AG04449 (cell line): ENCODE measurements at regions of chr2 and their contacts with region 1.

Region 1: DNA sequence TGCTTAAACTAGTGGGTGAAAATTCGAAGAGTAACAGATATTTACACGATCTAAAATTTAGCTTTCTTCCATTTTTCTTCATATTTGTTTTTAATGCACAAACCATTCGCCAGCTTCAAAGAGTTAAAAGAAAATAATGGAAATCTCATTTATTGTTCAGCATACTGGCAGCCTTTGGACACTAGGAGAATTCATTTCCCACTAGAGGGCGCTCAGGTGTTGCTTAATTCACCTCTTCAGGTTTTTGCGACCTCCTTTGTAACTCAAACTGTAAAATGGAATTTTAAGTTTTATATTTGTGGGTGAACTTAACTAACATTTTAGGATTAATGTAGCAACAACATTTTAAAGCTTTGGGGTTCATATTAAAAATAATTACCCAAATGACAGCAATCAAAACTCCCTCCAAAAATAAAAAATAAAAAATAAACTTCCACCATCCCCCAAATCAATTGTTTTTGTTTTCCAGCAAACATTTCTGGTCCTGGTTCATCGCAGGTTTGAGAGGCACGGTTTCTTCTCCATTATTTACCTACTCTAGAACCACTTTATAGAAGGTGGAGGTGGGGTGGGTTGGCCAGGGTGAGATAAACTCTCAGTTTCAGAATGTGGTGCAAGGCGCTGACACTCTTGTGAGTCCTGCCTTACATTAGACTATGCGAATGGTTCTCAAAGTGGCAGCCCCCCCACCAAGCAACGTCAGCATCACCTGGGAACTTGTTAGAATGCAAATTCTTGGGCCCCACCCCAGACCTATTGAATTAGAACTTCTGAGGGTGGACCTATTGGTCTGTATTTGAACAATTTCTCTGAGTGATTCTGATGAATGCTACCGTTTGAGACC is 24.7 kb upstream of the PNPT1 start:
- DNase-seq: peak; percentile 24
- H3K4me3 ChIP-seq: no peak overlapping the region
- CTCF ChIP-seq: peak; percentile 64

Region 2: GRCh38 chr2:55649211-55649610 is 69.2 kb before region 1 on chr2:
- CTCF ChIA-PET with region 1: no interaction called
- POLR2A ChIA-PET with region 1: no interaction called
- DNase-seq: no peak
- H3K4me3 ChIP-seq: no peak overlapping the region
- CTCF ChIP-seq: no peak

Region 3: DNA sequence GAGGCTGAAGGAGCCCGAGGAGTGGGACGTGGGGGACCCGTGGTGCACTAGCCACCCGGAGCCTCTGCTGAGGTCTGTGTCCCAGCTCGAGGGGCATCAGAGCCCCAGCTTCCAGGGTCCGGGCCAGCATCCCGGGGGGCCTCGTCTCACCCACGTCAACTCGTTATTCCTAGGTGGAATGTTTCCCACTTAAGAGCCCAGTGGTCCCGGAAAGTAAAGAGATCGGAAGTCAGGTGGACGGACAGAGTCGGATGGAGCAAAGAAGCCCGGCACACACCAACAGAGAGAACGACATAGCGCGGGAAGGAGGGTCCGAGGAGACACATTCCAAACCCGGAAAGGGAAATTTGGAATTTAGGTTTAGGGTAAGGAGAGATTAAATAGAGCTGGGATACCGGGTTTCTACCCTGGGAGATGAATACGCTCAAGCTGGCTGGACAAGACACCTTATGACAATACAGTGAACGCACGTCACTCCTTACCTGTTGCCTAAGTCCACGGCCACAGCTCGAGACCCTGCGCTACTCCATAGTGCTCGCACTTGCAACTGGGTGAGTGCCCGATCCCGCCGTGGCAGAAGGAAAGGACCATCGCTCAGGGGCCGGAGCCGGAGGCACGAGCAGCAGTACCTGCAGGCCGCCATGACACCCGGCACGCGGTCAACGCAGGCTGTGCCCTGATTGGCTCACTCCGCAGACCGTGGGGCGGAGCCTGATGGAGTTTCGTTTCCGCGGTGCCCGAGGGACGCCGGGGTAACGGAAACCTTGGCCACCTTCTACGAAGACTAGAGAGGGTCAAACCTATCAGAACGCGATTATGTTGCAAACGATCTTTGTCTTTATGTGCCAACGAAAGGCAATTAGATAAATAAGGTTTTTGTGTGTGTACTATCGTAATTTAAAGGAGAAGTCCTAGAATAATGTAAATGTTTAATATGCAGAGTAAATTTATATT is 24.9 kb before region 1 on chr2 and contains the start of gene PNPT1:
- CTCF ChIA-PET with region 1: interaction called, 12 read pairs
- POLR2A ChIA-PET with region 1: no interaction called
- DNase-seq: peak; percentile 54
- H3K4me3 ChIP-seq: peak within 1 kb of the TSS; percentile 100
- CTCF ChIP-seq: no peak

Region 4: GRCh38 chr2:55732854-55733253 is 14.5 kb after region 1 on chr2:
- CTCF ChIA-PET with region 1: interaction called, 32 read pairs
- POLR2A ChIA-PET with region 1: no interaction called
- DNase-seq: no peak
- H3K4me3 ChIP-seq: no peak overlapping the region
- CTCF ChIP-seq: no peak

Region 5: DNA sequence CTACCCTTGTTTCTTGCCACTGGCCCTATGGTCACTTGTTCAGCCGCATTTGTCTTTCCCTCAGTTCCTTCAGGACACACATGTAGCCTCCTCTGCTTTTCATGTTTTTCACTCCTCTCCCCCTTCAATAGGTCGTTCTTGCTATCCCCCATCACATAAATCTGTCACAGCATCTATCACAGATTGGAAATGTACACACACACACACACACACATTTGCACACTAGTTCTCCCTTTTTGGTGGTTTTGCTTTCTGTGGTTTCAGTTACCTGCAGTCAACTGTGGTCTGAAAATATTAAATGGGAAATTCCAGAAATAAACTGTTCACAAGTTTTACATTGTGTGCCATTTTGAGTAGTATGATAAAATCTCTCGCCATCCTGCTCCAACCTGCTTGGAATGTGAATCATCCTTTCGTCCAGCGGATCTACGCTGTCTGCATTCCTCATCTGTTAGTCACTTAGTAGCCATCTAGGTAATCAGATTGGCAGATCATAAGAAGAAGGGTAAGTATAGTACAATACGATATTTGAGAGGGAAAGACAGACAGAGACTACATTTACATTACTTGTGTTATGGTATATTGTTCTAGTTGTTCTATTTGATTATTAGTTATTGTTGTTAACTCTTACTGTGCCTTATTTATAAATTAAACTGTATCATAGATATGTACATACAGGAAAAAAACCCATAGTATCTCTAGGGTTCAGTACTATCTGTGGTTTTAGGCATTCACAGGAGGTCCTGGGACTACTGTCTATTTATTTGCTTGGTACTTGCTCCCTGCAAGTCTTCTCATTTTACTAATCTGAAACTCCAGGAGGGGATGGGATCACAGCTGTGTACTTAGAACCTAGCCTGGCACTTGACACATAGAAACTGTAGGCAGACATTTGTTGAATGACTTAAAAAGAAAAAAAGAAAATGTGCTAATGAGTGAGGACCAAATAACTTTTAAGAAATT is 61.4 kb after region 1 on chr2:
- CTCF ChIA-PET with region 1: interaction called, 10 read pairs
- POLR2A ChIA-PET with region 1: no interaction called
- DNase-seq: no peak
- H3K4me3 ChIP-seq: no peak overlapping the region
- CTCF ChIP-seq: no peak

Region 6: DNA sequence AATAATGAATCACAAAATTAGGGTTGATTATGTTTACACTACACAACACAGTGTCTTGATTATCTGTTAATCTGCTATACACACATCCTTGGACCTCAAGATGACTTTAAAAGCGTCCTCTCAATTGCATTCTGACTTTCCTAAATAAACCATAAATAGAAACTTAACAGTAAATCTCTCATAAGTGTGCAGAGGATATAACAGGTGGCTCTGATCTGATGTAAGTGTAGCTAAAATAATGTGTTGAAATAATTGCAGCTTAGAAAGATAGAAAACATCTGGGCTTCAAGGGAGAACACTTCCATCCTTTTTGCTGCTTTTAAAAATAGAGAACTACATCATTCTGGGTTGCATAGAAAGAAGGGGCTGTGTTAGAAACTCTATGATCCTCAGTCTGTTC is 283.6 kb after region 1 on chr2:
- CTCF ChIA-PET with region 1: interaction called, 29 read pairs
- POLR2A ChIA-PET with region 1: no interaction called
- DNase-seq: no peak
- H3K4me3 ChIP-seq: no peak overlapping the region
- CTCF ChIP-seq: no peak

Region 7: DNA sequence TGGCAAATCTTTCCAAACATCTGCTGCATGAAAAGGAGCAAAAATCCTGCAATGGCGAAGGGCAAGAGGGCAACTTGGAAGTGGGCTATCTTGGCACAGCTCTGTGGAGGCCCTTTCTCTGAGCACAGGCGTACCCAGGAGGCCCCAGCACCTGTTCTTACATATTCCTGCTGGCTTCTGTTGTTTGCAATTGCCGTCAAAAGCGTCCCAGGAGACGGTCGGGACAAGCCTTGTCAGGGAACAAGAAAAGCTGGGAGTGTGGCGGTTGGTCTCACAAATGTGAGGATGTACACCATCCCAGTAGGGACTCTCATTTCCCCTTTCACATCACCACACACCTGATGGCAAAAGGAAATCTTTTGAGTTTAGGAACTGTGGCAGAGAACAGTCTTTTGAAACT is 299.8 kb after region 1 on chr2:
- CTCF ChIA-PET with region 1: interaction called, 156 read pairs
- POLR2A ChIA-PET with region 1: no interaction called
- DNase-seq: no peak
- H3K4me3 ChIP-seq: no peak overlapping the region
- CTCF ChIP-seq: no peak

Region 8: GRCh38 chr2:56130463-56131070 is 412.2 kb after region 1 on chr2:
- CTCF ChIA-PET with region 1: interaction called, 53 read pairs
- POLR2A ChIA-PET with region 1: no interaction called
- DNase-seq: peak; percentile 3
- H3K4me3 ChIP-seq: no peak overlapping the region
- CTCF ChIP-seq: peak; percentile 62